Right ventricle myocardium inferior (tissue), 1 donor: ENCODE measurements at regions of chr18 and their contacts with region 1.

Region 1: GRCh38 chr18:51110073-51110803 is 80.2 kb downstream of the SMAD4 start:
- DNase-seq: peak; percentile 79
- ATAC-seq: peak; percentile 87

Region 2: DNA sequence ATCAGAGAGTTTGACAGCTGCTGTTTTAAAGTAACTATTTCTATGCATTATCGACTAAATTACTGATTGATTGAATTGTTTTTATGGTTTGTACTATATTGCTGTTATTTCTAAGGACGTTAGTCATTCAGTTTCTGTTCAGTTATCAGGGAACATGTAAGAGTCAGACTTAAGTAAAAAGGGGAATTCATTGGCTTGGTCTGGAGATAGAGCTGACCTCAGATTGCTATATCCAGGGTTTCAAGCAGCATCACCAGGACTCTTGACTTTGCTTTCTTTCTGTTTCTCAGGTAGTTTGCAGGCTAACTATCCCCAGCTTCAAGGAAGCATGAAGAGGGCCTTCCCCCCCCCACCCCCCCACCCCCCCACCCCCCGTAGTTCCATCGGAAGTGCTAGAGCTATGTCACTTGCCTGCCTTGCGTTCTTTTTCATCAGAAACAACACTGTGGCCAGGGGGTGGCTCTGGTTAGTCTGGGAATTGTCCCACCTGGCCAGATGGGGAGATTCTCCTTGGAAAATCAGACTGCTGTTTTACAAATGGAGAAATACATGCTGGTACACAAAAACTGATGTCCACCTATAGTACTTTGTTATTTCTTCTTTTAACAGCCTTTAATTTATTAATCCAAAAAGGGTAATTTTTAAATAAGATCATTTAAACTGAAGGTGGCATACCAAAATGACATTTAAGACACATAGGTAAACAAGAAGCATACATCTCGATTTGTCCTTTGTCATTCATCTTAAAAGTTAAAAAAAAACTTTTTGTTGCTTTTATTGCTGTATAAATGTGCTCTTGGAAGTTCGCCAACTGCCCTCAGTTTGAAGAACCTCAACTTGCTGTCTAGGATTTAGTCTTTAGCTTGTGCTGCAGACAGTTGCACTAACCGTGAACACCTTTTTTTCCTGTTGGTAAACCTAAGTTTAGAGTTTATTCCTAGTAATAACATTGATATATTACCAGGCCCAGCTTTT is 70.8 kb before region 1 on chr18:
- intact Hi-C with region 1: no loop called
- DNase-seq: no peak
- ATAC-seq: no peak

Region 3: GRCh38 chr18:51537487-51537886 is 427.2 kb after region 1 on chr18:
- intact Hi-C with region 1: loop called (anchors 2 kb)
- DNase-seq: no peak
- ATAC-seq: peak; percentile 80